Activated T-helper 2 cell treated with anti-CD3 and anti-CD28 coated beads, Interferon-gamma antibody, Interleukin-2, Interleukin-4, amounts not matched to agents 10 μg/mL and 5 μg/mL and 100 μg/mL, durations not matched to agents 14 hours and 24 hours and 36 hours (primary cell): ENCODE measurements at regions of chr12 and their contacts with region 1.

Region 1: DNA sequence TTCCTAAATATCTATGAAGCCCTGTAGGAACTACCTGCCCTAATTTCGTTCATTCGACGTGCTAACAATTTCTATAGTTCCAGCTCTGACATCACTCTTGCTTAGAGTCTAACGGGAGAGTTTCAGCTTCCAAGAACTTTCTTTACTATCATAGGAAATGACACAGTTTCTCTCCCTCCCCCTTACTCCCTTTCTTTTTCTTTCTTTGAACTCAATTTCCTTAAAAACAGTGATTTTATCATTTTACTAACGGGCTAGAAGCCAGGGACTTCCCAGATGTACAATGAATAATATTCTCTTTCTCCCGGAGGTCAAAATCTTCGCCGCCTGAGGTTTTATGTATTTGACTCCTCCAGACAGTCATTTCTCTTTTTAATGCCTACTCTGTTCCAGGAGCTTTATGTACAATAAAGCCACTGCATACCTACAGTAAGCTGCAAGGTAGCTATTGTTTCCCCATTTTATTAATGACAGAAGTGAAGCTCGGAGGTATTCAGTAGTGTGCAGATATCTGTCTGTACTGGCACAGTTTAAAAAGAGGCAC is 15.7 kb downstream of the SMCO2 start:
- DNase-seq: no peak
- H3K4me3 Mint-ChIP-seq: peak overlapping the region; percentile 1
- H3K27ac Mint-ChIP-seq: peak overlapping the region; percentile 72
- H3K4me1 Mint-ChIP-seq: peaks cover 53% of the 10 kb centered on the region
- H3K27me3 Mint-ChIP-seq: no peaks in the 10 kb centered on the region

Region 2: GRCh38 chr12:27434673-27435565 is 27.3 kb before region 1 on chr12:
- intact Hi-C with region 1: loop called (anchors 2 kb)
- DNase-seq: no peak
- H3K4me3 Mint-ChIP-seq: no peak overlapping the region
- H3K27ac Mint-ChIP-seq: no peak overlapping the region
- H3K4me1 Mint-ChIP-seq: peaks cover 55% of the 10 kb centered on the region
- H3K27me3 Mint-ChIP-seq: peaks cover 2% of the 10 kb centered on the region

Region 3: DNA sequence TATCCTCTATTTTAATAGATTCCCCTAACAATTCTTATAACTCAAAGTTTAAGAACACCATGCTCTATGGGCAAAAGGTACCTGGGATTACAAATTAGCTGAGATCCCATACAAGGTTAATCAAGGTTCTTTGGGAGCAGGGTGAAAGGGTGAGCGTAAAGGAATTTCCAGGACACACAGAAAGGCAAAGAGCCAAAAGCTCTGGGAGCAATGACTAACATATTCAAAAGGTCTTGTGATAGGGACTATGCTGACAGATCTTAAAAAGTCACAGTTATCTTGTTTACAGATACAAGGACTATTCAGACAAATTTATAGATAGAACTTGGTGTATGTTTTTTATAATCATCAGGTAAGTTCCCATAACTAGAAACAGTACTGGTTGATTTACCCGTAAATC is 42.3 kb after region 1 on chr12:
- intact Hi-C with region 1: loop called (anchors 1 kb)
- DNase-seq: no peak
- H3K4me3 Mint-ChIP-seq: no peak overlapping the region
- H3K27ac Mint-ChIP-seq: no peak overlapping the region
- H3K4me1 Mint-ChIP-seq: peaks cover 30% of the 10 kb centered on the region
- H3K27me3 Mint-ChIP-seq: peaks cover 32% of the 10 kb centered on the region

Region 4: DNA sequence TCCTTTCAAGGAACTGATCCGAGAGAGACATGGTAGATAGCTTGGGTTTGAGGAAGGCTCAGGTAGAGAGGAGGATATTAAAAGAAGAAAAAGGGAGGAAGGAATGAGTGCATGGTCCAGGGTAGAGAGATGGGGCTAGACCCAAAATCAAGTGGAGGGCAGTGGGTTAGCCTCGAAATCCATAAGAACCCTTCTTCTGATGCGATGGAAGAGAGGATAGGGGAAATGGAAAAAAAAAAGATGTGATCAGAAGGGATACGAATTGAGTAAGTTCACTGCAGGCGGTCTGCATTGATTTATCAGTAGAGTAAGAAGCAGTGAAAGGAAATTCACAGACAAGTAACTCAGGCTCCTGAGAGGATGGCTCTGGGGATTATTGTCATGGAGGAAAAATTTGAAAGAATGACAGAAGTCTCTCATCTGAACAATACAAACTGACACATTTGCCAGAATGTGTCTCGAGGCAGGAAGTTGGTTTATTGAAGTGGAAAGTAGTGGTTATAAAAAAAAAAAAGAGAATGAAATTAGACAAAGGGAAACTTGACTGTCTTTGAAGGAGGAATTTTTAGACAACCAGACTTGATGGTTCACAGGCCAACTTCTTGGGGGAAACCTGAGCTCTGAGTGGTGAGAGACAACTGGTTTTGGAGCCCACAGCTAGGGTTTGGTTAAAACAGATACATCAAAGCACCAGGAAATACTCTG is 72.0 kb after region 1 on chr12:
- intact Hi-C with region 1: loop called (anchors 1 kb)
- DNase-seq: peak; percentile 19
- H3K4me3 Mint-ChIP-seq: peak overlapping the region; percentile 6
- H3K27ac Mint-ChIP-seq: peak overlapping the region; percentile 62
- H3K4me1 Mint-ChIP-seq: peaks cover 43% of the 10 kb centered on the region
- H3K27me3 Mint-ChIP-seq: peaks cover 3% of the 10 kb centered on the region

Region 5: DNA sequence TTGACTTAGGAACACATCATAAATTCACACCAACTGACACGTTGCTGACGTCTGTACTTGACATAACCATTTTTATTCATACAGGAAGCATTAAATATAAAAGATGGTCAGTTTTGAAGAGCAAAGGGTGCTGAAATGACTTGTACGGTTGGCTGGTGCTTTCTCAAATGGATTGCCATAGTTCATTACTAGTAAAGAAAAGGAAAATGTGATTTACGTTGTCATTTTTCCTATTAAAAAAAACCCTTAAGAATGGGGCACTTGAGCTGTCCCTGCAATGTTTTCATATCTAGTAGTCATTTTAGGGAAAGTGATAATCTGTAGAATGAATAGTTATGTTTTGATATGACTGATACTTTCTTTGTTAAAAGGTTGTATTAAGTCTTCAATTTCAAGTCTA is 340.3 kb after region 1 on chr12:
- intact Hi-C with region 1: loop called (anchors 5 kb)
- DNase-seq: no peak
- H3K4me3 Mint-ChIP-seq: no peak overlapping the region
- H3K27ac Mint-ChIP-seq: no peak overlapping the region
- H3K4me1 Mint-ChIP-seq: peaks cover 36% of the 10 kb centered on the region
- H3K27me3 Mint-ChIP-seq: peaks cover 17% of the 10 kb centered on the region